Naive thymus-derived CD4-positive, alpha-beta T cell (primary cell): ENCODE measurements at regions of chr11 and their contacts with region 1.

Region 1: DNA sequence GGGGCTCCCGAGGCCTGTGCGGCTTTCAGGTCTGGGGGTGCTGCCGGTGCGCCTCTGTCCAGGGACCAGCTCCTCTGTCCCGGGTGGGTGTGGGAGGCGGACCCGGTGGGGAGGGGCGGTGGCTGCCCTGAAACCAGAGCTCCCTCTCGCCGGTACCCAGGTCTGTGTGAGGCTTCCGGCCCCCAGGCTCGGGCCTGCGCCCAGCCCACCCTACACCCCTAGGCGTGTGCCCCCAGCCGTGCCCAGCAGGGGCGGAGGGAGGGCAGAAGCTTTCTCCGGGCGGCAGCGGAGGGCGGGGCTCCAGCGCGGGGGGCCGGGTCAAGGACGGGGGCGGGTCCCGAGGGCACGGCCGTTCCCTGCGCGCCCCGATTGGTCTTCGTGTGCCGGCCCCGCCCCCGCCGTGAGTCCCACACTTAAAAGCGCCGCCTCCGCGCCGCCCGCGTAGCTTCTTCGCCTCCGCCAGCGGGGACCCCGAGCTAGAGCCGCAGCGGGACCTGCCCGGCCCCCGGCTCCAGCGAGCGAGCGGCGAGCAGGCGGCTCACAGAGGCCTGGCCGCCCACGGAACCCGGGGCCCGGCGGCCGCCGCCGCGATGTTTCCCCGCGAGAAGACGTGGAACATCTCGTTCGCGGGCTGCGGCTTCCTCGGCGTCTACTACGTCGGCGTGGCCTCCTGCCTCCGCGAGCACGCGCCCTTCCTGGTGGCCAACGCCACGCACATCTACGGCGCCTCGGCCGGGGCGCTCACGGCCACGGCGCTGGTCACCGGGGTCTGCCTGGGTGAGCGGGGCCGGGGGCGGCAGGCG is 616 bp downstream of the PNPLA2 start:
- DNase-seq: peak; percentile 85 to 95 (median 92)
- ATAC-seq: peak; percentile 86
- H3K4me3 ChIP-seq: peak overlapping the region; percentile 86
- H3K4me3 Mint-ChIP-seq: peak overlapping the region; percentile 82 to 92 (median 86)
- H3K27ac ChIP-seq: peak overlapping the region; percentile 91
- H3K27ac Mint-ChIP-seq: peak overlapping the region in 7 of 9 donors; percentile 67 to 93 (median 86)
- H3K4me1 ChIP-seq: peaks cover 12 to 15% of the 10 kb centered on the region in 2 donors
- H3K4me1 Mint-ChIP-seq: peaks cover 0 to 24% (median 13%) of the 10 kb centered on the region in 7 donors
- H3K27me3 ChIP-seq: no peaks in the 10 kb centered on the region
- H3K27me3 Mint-ChIP-seq: no peaks in the 10 kb centered on the region

Region 2: DNA sequence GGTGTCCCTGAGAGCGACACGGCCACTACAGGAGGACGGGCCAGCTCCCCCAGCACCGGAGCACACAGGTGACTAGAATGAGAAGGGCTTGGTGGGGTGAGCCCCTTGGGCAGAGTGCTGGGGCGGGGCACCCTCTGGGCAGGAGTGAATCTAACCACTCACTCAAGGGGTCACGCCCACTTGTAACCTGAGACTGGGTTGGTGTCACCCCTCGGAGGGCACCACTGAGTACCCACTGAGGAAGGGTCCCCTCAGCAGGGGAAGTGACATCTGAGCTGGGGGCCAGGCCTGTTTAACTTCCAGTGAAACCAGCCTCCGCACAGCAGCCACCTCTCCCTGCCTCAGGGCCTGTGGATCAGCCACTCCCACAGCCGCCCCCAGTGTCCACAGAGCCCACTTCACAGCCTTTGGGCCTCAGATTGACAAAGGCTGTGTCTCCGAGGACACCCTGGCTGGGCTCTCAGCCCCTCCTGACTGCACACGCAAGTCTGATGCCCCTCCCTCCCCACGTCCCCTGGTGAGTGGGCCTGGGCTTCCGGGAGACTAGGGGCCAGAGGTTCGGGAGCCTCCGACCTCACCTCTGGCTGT is 47.6 kb before region 1 on chr11:
- CTCF ChIA-PET with region 1: no interaction called
- POLR2A ChIA-PET with region 1: no interaction called
- intact Hi-C with region 1: no loop called
- DNase-seq: no peak
- ATAC-seq: no peak
- H3K4me3 ChIP-seq: no peak overlapping the region
- H3K4me3 Mint-ChIP-seq: no peak overlapping the region
- H3K27ac ChIP-seq: no peak overlapping the region
- H3K27ac Mint-ChIP-seq: no peak overlapping the region
- H3K4me1 ChIP-seq: peaks cover 7 to 9% of the 10 kb centered on the region in 2 donors
- H3K4me1 Mint-ChIP-seq: peaks cover 4 to 19% (median 14%) of the 10 kb centered on the region in 7 donors
- H3K27me3 ChIP-seq: no peaks in the 10 kb centered on the region
- H3K27me3 Mint-ChIP-seq: no peaks in the 10 kb centered on the region

Region 3: DNA sequence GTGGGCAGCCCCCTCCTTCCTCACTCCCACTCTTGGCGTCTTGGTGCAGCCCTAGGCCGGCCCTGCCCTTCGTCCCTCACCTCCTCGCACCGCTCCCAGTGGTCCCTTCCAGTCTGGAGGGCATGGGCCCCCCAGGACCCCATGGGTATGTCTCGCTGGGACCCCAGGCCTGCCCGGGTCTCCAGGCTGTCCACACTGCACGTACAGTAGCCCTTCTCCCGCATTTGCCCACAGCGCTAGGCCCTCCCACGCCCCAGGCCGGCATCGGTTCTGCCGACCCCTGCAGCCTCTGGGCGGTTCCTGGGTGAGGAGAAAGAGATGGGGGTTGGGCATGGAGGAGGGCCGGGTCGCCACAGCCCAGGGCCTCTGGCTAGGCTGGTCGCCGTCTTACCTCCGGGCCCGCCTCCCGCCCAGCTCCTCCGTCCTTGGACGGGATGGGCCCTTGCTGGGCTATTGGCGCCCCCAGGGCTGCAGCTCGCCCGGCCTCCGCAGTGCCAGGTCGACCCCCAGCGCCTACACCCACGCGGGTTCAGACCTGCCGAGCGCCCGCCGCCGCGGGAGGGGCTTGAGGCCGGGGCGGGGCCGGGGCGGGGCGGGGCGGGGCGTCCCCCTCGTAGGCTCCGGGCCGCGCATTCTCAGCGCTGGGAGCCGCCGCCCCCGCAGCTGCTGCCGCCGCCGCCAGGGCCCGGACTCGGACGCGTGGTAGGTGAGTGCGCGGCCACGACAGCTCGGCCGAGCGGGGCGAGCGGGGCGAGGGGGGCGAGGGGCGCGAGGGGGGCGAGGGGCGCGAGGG is 13.2 kb after region 1 on chr11 and contains the start of gene CD151:
- CTCF ChIA-PET with region 1: interaction called, 3 read pairs
- POLR2A ChIA-PET with region 1: interaction called, 79 read pairs
- intact Hi-C with region 1: loop called in 1 of 2 experiments (anchors 1 kb)
- DNase-seq: peak in 1 of 9 donors; percentile 68
- ATAC-seq: peak; percentile 69
- H3K4me3 ChIP-seq: peak within 1 kb of the TSS; percentile 27
- H3K4me3 Mint-ChIP-seq: peak within 1 kb of the TSS in 9 of 10 donors; percentile 52 to 83 (median 67)
- H3K27ac ChIP-seq: peak within 1 kb of the TSS; percentile 35
- H3K27ac Mint-ChIP-seq: peak within 1 kb of the TSS in 1 of 9 donors; percentile 23
- H3K4me1 ChIP-seq: peaks cover 10 to 38% of the 10 kb centered on the region in 2 donors
- H3K4me1 Mint-ChIP-seq: peaks cover 5 to 32% (median 29%) of the 10 kb centered on the region in 7 donors
- H3K27me3 ChIP-seq: peaks cover 0 to 9% of the 10 kb centered on the region in 2 donors
- H3K27me3 Mint-ChIP-seq: peaks cover 13 to 51% (median 21%) of the 10 kb centered on the region in 5 donors
- total RNA-seq, gene CD151: 6.6 to 62.9 (median 18.5) TPM

Region 4: DNA sequence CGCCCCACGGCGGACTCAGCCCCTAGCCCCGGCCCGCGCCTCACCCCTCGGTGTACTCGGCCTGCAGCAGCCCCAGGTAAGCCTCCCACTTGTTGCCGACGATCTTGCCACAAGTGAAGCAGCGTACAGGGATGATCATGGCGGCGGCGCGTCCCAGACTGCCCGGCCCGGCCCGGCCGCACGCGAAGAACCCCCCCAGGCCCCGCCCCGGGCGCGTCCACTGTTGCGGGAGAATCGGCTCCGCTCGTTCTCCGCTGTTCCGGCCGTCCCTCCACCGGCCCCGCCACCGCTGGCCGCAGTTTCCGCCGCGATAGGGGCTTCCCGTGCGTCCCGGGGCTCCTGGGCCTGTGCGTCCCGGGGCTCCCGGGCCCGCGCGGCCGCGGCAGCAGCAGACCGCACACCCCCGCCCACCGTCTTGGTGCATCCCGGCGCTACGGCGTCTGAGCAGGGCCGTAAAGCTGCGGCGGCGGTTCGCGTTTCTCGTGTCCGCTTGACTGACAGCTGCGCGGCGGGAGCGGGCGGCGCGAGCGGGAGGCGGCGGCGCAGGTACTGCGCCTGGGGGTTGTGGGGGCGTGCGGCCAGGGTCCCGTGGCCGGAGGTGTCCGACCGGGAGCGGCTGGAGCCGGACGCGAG is 23.2 kb after region 1 on chr11 and contains the starts of genes POLR2L and TSPAN4:
- CTCF ChIA-PET with region 1: interaction called, 3 read pairs
- POLR2A ChIA-PET with region 1: interaction called, 36 read pairs
- intact Hi-C with region 1: loop called (anchors 1 kb)
- DNase-seq: peak; percentile 76 to 97 (median 81)
- ATAC-seq: peak; percentile 86
- H3K4me3 ChIP-seq: peak within 1 kb of the TSS; percentile 83
- H3K4me3 Mint-ChIP-seq: peak within 1 kb of the TSS; percentile 74 to 89 (median 86)
- H3K27ac ChIP-seq: peak within 1 kb of the TSS; percentile 89
- H3K27ac Mint-ChIP-seq: peak within 1 kb of the TSS; percentile 28 to 89 (median 70)
- H3K4me1 ChIP-seq: peaks cover 16 to 21% of the 10 kb centered on the region in 2 donors
- H3K4me1 Mint-ChIP-seq: peaks cover 5 to 36% (median 18%) of the 10 kb centered on the region in 7 donors
- H3K27me3 ChIP-seq: no peaks in the 10 kb centered on the region
- H3K27me3 Mint-ChIP-seq: peaks cover 0 to 2% (median 0%) of the 10 kb centered on the region in 5 donors
- total RNA-seq, gene POLR2L: 31.2 to 93.3 (median 44.9) TPM
- total RNA-seq, gene TSPAN4: 4.8 to 12.6 (median 6.6) TPM

Region 5: GRCh38 chr11:1050581-1051355 is 231.4 kb after region 1 on chr11:
- CTCF ChIA-PET with region 1: no interaction called
- POLR2A ChIA-PET with region 1: no interaction called
- intact Hi-C with region 1: loop called in 1 of 2 experiments (anchors 1 kb)
- DNase-seq: peak; percentile 54 to 78 (median 68)
- ATAC-seq: peak; percentile 95
- H3K4me3 ChIP-seq: no peak overlapping the region
- H3K4me3 Mint-ChIP-seq: no peak overlapping the region
- H3K27ac ChIP-seq: no peak overlapping the region
- H3K27ac Mint-ChIP-seq: no peak overlapping the region
- H3K4me1 ChIP-seq: no peaks in the 10 kb centered on the region
- H3K4me1 Mint-ChIP-seq: peaks cover 0 to 5% (median 0%) of the 10 kb centered on the region in 7 donors
- H3K27me3 ChIP-seq: peaks cover 0 to 5% of the 10 kb centered on the region in 2 donors
- H3K27me3 Mint-ChIP-seq: peaks cover 0 to 11% (median 4%) of the 10 kb centered on the region in 5 donors